ENCODE measurements at regions of chr7 and their contacts with region 1.

Region 1: GRCh38 chr7:118195837-118196474 is 12.0 kb downstream of the LSM8 start:
- DNase-seq: no peak
- H3K4me3 ChIP-seq: no peak overlapping the region
- CTCF ChIP-seq: peak; percentile 52

Region 2: GRCh38 chr7:117750612-117751563 is 445.1 kb before region 1 on chr7:
- CTCF ChIA-PET with region 1: interaction called, 22 read pairs
- POLR2A ChIA-PET with region 1: no interaction called
- DNase-seq: no peak
- H3K4me3 ChIP-seq: no peak overlapping the region
- CTCF ChIP-seq: peak; percentile 18

Region 3: GRCh38 chr7:118153551-118154177 is 42.3 kb before region 1 on chr7:
- CTCF ChIA-PET with region 1: no interaction called
- POLR2A ChIA-PET with region 1: no interaction called
- DNase-seq: no peak
- H3K4me3 ChIP-seq: no peak overlapping the region
- CTCF ChIP-seq: peak; percentile 27

Region 4: DNA sequence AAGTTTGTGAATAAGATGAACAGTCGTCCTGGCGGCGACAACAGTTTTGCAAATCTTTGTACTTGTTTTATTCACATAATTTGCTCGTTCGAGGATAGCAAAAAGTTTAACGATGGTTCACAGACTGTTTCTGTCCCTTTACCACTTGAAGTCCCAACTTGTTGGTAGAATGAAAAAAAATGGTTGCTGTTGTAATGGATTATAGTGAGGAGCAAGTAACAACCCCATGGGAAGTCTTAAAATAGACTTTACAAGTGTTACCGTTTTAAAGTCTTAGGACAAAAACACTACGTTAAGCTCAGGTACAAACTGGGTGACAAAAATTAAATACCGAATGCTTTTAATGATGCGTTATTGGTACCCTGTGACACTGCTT is 11.4 kb before region 1 on chr7:
- CTCF ChIA-PET with region 1: interaction called, 28 read pairs
- POLR2A ChIA-PET with region 1: no interaction called
- DNase-seq: no peak
- H3K4me3 ChIP-seq: peak overlapping the region; percentile 85
- CTCF ChIP-seq: no peak

Measured in AG04449 (cell line).